GM23248 (cell line): ENCODE measurements at regions of chr6 and their contacts with region 1.

Region 1: DNA sequence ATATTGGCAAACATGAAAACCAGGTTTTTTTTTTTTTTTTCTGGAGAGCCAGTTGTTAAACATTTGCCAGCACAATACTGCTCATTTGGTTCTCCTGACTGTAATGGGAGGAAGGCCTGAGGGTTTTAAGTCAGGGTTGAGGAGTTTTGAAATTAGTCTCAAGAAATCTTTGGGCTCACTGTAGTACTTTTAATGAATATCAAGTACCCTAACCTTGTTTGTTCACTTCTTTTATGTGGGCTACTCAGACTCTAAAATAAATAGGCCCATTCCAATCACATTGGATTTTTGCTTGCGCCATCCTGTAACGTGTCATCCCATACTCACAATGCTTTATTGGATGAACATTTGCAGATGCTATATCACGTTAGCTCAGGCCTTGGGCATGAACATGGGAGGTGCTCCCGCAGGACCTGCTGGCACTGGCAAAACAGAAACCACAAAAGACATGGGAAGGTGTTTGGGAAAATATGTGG is 146.9 kb downstream of the DNAH8 start:
- DNase-seq: no peak
- H3K4me3 ChIP-seq: no peak overlapping the region
- H3K27ac ChIP-seq: no peak overlapping the region
- H3K4me1 ChIP-seq: no peaks in the 10 kb centered on the region
- H3K27me3 ChIP-seq: 0 out of 2 replicates have a peak, but pooled peaks cover 3% of the 10 kb centered on the region

Region 2: DNA sequence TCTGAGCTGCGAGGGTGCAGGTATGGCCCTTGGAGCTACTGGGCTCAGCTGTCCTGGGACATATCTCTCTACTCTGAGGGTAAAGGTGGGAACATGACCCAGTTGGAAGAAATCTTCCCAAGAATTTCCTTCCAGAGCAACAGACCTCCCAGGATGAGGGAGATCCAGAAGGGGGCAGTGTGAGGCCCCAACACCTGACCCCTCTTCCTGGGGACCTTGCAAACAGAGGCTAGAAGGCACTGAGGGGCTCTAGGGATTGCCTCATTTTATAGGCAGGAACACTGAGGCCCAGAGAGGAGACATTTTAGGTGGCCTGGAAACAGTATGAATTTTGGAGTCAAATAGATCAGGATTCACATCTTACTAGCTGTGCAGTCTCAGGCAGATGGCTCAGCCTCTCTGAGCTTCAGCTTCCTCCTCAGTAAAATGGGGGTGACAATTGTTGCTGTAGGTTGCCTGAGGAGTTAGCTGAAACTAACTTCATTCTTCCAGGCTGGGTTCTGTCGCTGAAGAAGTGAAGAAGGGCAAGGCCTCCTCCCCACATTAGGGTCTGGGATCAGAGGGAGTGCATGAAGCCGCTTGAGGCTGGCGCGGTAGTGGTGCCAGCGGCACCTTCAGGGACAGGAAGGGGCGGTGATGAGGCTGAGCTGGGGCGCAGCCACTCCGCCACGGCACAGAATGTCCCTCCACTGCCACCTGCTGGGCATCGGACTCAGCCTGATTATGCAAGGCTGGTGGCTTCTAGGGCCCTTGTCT is 440.9 kb after region 1 on chr6:
- in situ Hi-C with region 1: loop called (anchors 10 kb)
- DNase-seq: peak; percentile 83
- H3K4me3 ChIP-seq: peak overlapping the region; percentile 48; the same call in 1 of the 2 replicates
- H3K27ac ChIP-seq: no peak overlapping the region
- H3K4me1 ChIP-seq: no peaks in the 10 kb centered on the region
- H3K27me3 ChIP-seq: no peaks in the 10 kb centered on the region; the same call in 1 of the 2 replicates